Heart left ventricle (tissue), 16 donors: ENCODE measurements at regions of chr5 and their contacts with region 1.

Region 1: DNA sequence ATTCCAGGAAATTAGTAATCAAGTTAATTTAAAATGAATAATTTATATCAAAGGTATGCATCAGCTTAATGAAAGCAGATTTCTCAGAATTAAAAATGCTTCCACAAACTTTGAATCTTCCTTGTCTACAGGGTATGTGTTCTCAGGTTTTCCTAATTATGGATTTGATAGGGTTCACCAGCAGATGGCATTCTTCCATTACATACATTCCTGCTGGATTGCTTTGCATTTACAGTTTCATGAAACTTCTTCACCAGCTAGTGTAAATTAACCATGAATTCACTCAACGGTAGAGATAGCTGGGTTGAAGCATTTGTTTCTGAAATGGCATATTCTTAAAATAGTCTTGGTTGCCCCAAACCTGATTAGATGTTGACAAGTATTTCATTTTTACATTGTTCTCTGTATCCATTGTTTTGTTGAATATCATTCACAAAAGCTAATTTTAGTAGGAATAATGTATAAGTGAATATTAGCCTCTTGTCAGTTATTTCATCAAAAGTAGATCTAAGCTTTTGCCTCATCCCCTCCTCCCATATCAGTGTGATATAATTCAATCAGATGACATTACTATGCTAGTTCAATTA is 68.7 kb upstream of the WDR41 start:
- DNase-seq: no peak
- ATAC-seq: peak in 1 of 4 donors; percentile 33
- H3K4me3 ChIP-seq: no peak overlapping the region
- H3K27ac ChIP-seq: no peak overlapping the region
- H3K4me1 ChIP-seq: peaks cover 0 to 4% (median 0%) of the 10 kb centered on the region in 12 donors
- H3K27me3 ChIP-seq: peaks cover 0 to 7% (median 0%) of the 10 kb centered on the region in 9 donors
- CTCF ChIP-seq: peak; percentile 29 to 66 (median 42)
- POLR2A ChIP-seq: no peak

Region 2: GRCh38 chr5:77638763-77639671 is 78.2 kb after region 1 on chr5:
- intact Hi-C with region 1: no loop called
- DNase-seq: no peak
- ATAC-seq: no peak
- H3K4me3 ChIP-seq: peak overlapping the region in 1 of 12 donors; percentile 2
- H3K27ac ChIP-seq: no peak overlapping the region
- H3K4me1 ChIP-seq: peaks cover 0 to 51% (median 10%) of the 10 kb centered on the region in 12 donors
- H3K27me3 ChIP-seq: peaks cover 86 to 100% (median 100%) of the 10 kb centered on the region in 9 donors
- CTCF ChIP-seq: no peak
- POLR2A ChIP-seq: no peak

Region 3: GRCh38 chr5:77663090-77663863 is 102.5 kb after region 1 on chr5:
- intact Hi-C with region 1: no loop called
- DNase-seq: peak in 3 of 5 donors; percentile 27 to 62 (median 37)
- ATAC-seq: peak in 3 of 4 donors; percentile 59 to 74 (median 61)
- H3K4me3 ChIP-seq: no peak overlapping the region
- H3K27ac ChIP-seq: no peak overlapping the region
- H3K4me1 ChIP-seq: no peaks in the 10 kb centered on the region
- H3K27me3 ChIP-seq: peaks cover 0 to 60% (median 5%) of the 10 kb centered on the region in 9 donors
- CTCF ChIP-seq: no peak
- POLR2A ChIP-seq: no peak

Region 4: GRCh38 chr5:78162253-78162862 is 601.6 kb after region 1 on chr5:
- intact Hi-C with region 1: loop called in 1 of 10 experiments (anchors 5 kb)
- DNase-seq: no peak
- ATAC-seq: no peak
- H3K4me3 ChIP-seq: no peak overlapping the region
- H3K27ac ChIP-seq: no peak overlapping the region
- H3K4me1 ChIP-seq: no peaks in the 10 kb centered on the region
- H3K27me3 ChIP-seq: no peaks in the 10 kb centered on the region
- CTCF ChIP-seq: peak in 11 of 12 donors; percentile 17 to 52 (median 34)
- POLR2A ChIP-seq: no peak

Region 5: GRCh38 chr5:78269088-78269703 is 708.4 kb after region 1 on chr5:
- intact Hi-C with region 1: loop called in 3 of 10 experiments (anchors 5 to 10 kb)
- DNase-seq: no peak
- ATAC-seq: no peak
- H3K4me3 ChIP-seq: peak overlapping the region in 1 of 12 donors; percentile 1
- H3K27ac ChIP-seq: peak overlapping the region in 1 of 12 donors; percentile 19
- H3K4me1 ChIP-seq: peaks cover 0 to 29% (median 18%) of the 10 kb centered on the region in 12 donors
- H3K27me3 ChIP-seq: no peaks in the 10 kb centered on the region
- CTCF ChIP-seq: peak; percentile 37 to 58 (median 48)
- POLR2A ChIP-seq: no peak